Posterior cingulate gyrus (tissue), 11 donors: ENCODE measurements at regions of chr1 and their contacts with region 1.

Region 1: DNA sequence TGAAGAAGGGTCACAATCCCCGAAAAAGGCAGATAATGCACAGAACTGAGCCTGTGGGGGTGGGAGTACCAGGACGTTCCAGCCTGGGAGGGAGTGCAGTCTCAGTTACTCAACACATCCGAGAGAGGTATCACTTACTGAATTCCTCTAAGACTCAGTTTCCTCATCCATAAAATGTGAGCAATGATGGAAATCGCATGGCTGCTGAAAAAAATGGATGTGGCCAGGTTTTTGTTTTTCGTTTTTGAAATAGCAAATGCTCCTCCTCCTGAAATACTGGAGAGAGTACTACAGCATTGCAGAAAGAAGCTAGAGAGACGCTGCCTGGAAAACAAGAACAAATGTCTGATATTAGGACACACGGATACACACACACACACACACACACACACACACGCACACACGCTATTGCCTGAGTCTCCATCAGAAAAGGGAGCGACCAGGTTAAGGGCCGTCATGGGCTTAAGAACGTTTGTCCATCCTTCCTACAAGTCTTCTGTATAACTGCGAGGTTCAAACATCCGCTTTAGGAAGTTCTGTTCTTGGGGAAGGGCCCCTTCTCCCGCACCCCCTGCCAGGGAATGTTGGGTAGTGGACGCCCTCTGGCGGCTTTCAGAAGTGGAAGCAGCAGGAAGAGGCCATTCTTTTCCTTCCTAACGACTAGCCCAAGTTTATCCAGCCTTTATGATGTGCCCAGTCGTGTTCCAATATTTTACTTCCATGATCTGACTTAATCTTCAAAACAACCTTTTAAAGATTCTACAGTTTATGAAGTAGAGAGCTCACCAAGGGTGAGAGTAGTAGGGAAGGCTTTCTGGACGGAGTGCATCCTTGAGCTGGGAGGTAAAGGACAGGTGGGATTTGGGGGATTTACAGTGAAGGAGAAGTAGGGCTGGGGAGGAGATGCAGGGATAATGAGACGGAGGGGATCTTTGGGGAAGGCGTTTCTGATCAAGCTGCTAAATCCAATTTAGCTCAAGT is 699 bp upstream of the NES start:
- DNase-seq: peak in 9 of 10 donors; percentile 45 to 97 (median 74)

Region 2: DNA sequence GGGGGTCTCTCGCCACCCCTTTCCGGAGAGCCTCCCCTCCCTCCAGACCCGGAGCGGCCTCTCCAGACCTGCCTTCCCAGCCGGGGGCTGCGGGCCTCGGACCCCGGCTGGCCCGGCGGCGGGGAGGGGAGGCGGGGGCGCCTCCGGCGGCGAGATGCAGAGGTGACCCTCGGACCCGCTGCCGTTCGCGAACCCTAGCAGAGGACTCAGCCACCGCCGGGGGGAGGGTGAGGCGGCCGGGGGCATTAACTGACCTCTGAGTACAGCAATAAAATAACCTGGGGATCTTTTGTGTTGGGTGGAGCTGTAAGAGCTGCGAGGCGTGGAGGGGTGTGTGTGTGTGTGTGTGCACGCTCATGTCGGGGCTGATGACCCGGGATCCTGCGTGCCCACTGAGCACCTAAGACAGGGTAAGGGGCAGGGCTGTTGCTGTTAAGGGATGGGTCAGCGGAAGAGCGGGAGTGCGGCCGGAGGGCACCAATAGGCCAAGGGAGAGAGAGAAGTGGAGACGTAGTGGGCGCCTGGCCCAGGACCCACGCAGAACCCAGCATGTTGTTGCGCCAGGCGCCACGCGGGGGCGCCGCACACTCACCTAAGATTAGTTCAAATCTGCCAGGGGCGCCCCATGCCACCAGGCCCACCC is 52.3 kb before region 1 on chr1:
- intact Hi-C with region 1: loop called (anchors 5 kb)
- DNase-seq: peak in 7 of 10 donors; percentile 66 to 93 (median 75)